ENCODE measurements at regions of chr19 and their contacts with region 1.

Region 1: DNA sequence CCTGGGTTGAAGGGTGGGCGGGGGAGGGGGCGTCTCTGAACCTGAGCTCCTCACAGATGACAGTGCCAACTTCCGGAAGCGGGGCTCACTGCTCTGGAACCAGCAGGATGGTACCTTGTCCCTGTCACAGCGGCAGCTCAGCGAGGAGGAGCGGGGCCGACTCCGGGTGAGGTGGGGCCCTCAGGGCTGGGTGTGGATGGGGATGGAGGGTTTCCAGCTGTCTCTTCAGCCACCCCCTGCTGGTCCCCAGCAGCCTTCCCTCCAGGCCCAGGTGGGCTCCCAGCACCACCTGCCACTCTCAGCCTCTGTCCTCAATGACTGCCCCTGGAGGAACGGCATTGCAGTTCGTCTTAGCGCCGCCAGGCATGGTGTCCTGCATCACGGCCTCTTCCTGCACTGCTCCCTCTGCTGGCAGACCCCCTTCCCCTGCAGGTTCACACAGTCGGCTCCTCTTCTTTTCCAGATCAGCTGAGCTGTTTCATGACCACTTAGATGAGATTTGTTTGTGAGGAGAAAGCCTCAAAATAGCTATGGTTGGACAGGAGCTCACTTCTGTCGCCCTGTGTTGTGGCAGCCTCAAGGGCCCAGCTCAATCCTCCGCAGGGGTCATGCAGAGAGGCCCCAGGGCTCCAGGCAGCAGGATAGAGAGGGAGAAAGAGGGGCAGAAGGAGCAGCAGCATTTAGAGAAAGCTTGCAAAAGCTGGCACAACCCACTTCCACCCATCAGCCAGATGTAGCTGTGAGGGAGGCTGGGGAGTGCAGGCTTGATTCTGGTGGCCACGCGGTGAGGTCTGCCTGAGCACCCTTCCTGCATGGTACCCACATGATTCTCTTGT is 2.5 kb upstream of the GARIN5A start:
- DNase-seq: no peak
- H3K4me3 ChIP-seq: no peak overlapping the region
- CTCF ChIP-seq: peak; percentile 68

Region 2: DNA sequence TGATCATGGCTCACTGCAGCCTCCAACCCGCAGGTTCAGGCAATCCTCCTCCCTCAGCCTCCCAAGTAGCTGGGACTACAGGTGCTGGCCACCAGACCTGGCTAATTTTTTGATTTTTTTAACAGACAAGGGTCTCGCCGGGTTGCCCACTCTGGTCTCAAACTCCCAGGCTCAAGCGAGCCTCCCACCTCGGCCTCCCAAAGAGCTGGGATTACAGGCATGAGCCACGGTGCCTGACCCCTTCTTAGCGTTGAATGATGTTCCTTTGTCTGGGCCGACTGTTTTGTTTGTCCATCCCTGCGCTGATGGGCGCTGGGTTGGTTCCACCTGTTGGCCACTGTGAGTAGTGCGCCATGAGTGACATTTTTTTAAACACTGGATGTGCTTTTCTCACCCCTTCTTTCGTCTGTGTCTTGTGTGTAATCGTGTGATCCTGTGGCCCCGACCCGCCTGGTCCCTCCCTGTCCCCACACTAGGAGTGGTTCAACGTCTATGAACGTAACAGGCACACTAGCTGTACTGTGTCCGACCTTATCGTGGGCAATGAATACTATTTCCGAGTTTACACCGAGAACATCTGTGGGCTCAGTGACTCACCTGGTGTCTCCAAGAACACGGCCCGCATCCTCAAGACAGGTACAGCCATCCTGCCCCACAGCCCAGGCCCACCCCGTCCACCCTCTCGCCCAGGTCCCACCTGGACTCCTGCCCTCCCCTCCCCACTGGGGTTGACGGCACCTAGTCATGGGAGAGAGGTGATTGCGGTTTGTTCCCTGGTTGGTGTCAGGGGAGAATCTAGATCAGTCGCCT is 17.8 kb before region 1 on chr19:
- CTCF ChIA-PET with region 1: interaction called, 35 read pairs
- POLR2A ChIA-PET with region 1: no interaction called
- DNase-seq: no peak
- H3K4me3 ChIP-seq: no peak overlapping the region
- CTCF ChIP-seq: peak; percentile 88

Region 3: DNA sequence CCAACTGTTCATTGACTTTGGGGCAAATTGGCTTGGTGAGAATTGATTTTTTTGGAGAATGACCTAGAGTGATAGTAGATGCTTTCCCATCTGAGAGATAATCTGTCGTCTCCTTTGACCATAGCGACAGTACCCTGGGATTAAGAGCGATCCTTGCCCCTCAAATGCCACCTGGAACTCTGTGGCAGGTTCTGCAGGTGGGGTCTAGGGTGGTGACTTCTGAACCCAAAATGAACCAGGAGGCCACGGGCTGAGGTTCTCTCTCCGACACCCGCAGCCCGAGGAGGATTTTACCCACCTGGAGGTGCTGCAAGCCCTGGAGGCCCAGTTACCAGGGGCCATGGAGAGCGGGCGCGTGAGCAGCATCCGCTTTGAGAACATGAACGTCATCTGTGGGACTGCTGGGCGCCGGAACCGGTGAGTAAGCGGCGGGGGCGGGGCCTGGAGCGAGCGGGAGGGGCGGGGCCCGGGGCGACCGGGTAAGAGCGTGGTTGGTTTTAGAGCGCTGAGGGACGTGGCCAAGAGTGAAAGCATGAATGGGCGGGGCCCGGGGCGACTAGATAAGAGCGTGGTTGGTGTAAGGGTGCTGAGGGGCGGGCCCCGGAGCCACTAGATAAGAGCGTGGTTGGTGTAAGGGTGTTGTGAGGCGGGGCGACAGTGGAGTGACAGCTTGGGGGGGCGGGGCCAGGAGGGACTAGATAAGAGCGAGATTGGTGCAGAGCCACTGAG is 178.8 kb after region 1 on chr19:
- CTCF ChIA-PET with region 1: no interaction called
- POLR2A ChIA-PET with region 1: no interaction called
- DNase-seq: peak; percentile 95
- H3K4me3 ChIP-seq: peak overlapping the region; percentile 64
- CTCF ChIP-seq: no peak